ENCODE measurements at regions of chrX and their contacts with region 1.

Region 1: GRCh38 chrX:46758906-46759644 is at the start of gene SLC9A7:
- DNase-seq: peak; percentile 55 to 81 (median 75)
- ATAC-seq: peak; percentile 89
- H3K4me3 ChIP-seq: peak within 1 kb of the TSS; percentile 61
- H3K4me3 Mint-ChIP-seq: peak within 1 kb of the TSS; percentile 87 to 98 (median 90)
- H3K27ac ChIP-seq: peak within 1 kb of the TSS; percentile 41
- H3K27ac Mint-ChIP-seq: peak within 1 kb of the TSS in 8 of 9 donors; percentile 15 to 95 (median 72)
- H3K4me1 ChIP-seq: peaks cover 0 to 4% of the 10 kb centered on the region in 2 donors
- H3K4me1 Mint-ChIP-seq: peaks cover 4 to 24% (median 13%) of the 10 kb centered on the region in 7 donors
- H3K27me3 ChIP-seq: no peaks in the 10 kb centered on the region
- H3K27me3 Mint-ChIP-seq: peaks cover 0 to 18% (median 3%) of the 10 kb centered on the region in 5 donors
- total RNA-seq, gene SLC9A7: 3.0 to 11.3 (median 4.4) TPM

Region 2: GRCh38 chrX:46704767-46705386 is 54.2 kb before region 1 on chrX:
- CTCF ChIA-PET with region 1: no interaction called
- POLR2A ChIA-PET with region 1: no interaction called
- intact Hi-C with region 1: loop called in 1 of 2 experiments (anchors 5 kb)
- DNase-seq: peak in 1 of 9 donors; percentile 42
- ATAC-seq: peak; percentile 32
- H3K4me3 ChIP-seq: no peak overlapping the region
- H3K4me3 Mint-ChIP-seq: peak overlapping the region in 1 of 10 donors; percentile 76
- H3K27ac ChIP-seq: no peak overlapping the region
- H3K27ac Mint-ChIP-seq: peak overlapping the region in 5 of 9 donors; percentile 9 to 92 (median 35)
- H3K4me1 ChIP-seq: no peaks in the 10 kb centered on the region
- H3K4me1 Mint-ChIP-seq: peaks cover 6 to 45% (median 7%) of the 10 kb centered on the region in 7 donors
- H3K27me3 ChIP-seq: no peaks in the 10 kb centered on the region
- H3K27me3 Mint-ChIP-seq: no peaks in the 10 kb centered on the region

Region 3: GRCh38 chrX:46737473-46737872 is 21.6 kb before region 1 on chrX:
- CTCF ChIA-PET with region 1: no interaction called
- POLR2A ChIA-PET with region 1: no interaction called
- intact Hi-C with region 1: no loop called
- DNase-seq: no peak
- ATAC-seq: no peak
- H3K4me3 ChIP-seq: no peak overlapping the region
- H3K4me3 Mint-ChIP-seq: no peak overlapping the region
- H3K27ac ChIP-seq: no peak overlapping the region
- H3K27ac Mint-ChIP-seq: no peak overlapping the region
- H3K4me1 ChIP-seq: no peaks in the 10 kb centered on the region
- H3K4me1 Mint-ChIP-seq: peaks cover 0 to 11% (median 0%) of the 10 kb centered on the region in 7 donors
- H3K27me3 ChIP-seq: no peaks in the 10 kb centered on the region
- H3K27me3 Mint-ChIP-seq: no peaks in the 10 kb centered on the region

Region 4: DNA sequence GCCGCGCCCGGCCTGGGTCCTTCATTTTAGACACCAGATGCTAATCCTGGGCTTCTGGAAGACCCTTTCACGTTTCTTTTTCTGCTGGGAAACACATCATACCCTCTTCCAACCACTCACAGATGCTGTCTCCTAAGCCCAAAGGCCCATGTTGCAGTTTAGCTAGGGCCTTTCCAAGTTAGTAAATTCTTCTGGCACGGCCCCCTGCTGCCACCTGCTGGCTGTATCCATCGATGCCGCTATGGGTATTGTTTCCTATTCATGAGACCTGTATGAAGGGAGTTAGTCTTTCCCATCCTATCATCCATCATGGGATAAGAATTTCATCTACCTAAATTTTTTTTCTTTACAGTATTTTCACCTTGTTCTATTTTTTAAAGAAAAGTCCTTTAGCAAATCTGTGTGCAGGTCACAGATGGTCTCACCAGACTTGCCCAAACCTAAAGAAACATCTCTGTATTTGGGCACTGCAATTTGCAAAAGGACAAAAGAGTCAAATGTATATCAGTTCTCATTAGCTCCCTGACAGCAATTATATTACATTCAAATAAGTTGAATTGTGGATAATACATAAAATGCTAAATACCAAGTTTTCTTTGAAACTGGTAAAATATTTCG is 37.6 kb after region 1 on chrX:
- CTCF ChIA-PET with region 1: interaction called, 7 read pairs
- POLR2A ChIA-PET with region 1: interaction called, 3 read pairs
- intact Hi-C with region 1: loop called (anchors 1 kb)
- DNase-seq: peak; percentile 25 to 67 (median 52)
- ATAC-seq: peak; percentile 76
- H3K4me3 ChIP-seq: no peak overlapping the region
- H3K4me3 Mint-ChIP-seq: no peak overlapping the region
- H3K27ac ChIP-seq: no peak overlapping the region
- H3K27ac Mint-ChIP-seq: no peak overlapping the region
- H3K4me1 ChIP-seq: no peaks in the 10 kb centered on the region
- H3K4me1 Mint-ChIP-seq: peaks cover 0 to 19% (median 6%) of the 10 kb centered on the region in 7 donors
- H3K27me3 ChIP-seq: no peaks in the 10 kb centered on the region
- H3K27me3 Mint-ChIP-seq: peaks cover 0 to 6% (median 0%) of the 10 kb centered on the region in 5 donors

Region 5: DNA sequence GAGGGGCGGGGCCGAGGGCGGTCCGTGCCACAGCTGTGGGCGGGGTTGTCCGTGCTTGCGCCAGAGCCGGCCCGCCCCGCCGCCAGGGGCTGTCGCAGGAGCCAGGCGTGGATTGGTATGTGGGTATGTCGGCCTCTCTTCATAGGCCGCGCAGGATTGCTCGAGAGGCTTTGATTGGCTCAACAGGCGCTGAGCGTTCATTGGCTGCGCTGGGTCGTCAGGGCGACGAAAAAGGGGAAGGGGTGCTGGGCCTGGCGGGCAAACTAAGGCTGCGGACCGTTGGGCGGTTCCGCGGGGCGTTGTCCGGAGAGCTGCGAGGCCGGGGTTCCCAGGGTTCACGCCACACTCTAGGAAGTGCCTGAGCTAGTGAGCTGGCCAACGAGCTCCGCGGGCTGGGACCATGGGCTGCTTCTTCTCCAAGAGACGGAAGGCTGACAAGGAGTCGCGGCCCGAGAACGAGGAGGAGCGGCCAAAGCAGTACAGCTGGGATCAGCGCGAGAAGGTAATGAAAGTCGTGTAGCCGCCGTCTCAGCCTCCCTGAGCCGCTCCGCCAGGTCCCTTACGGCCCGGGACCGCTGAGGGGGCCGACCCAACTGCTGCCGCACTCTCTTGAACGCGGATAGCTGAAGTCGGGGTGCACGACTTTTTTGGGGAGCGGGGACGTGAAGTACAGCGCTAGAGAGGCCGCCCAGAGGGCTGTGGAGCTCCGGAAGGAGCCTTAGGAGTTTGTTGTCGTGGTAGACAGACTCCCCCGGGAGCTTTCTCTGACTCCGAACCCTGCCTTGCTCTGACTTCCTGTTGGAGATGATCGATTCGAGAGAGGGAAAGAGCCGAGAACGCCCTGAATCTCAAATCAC is 77.9 kb after region 1 on chrX and contains the start of gene RP2:
- CTCF ChIA-PET with region 1: no interaction called
- POLR2A ChIA-PET with region 1: no interaction called
- intact Hi-C with region 1: loop called (anchors 2 kb)
- DNase-seq: peak; percentile 65 to 84 (median 81)
- ATAC-seq: peak; percentile 98
- H3K4me3 ChIP-seq: peak within 1 kb of the TSS; percentile 91
- H3K4me3 Mint-ChIP-seq: peak within 1 kb of the TSS; percentile 93 to 99 (median 97)
- H3K27ac ChIP-seq: peak within 1 kb of the TSS; percentile 83
- H3K27ac Mint-ChIP-seq: peak within 1 kb of the TSS; percentile 80 to 98 (median 93)
- H3K4me1 ChIP-seq: no peaks in the 10 kb centered on the region
- H3K4me1 Mint-ChIP-seq: peaks cover 0 to 29% (median 12%) of the 10 kb centered on the region in 7 donors
- H3K27me3 ChIP-seq: no peaks in the 10 kb centered on the region
- H3K27me3 Mint-ChIP-seq: peaks cover 0 to 3% (median 0%) of the 10 kb centered on the region in 5 donors
- total RNA-seq, gene RP2: 4.9 to 14.5 (median 6.3) TPM

Region 6: GRCh38 chrX:46903458-46904242 is 144.6 kb after region 1 on chrX:
- CTCF ChIA-PET with region 1: no interaction called
- POLR2A ChIA-PET with region 1: no interaction called
- intact Hi-C with region 1: loop called in 1 of 2 experiments (anchors 1 kb)
- DNase-seq: peak; percentile 15 to 57 (median 37)
- ATAC-seq: peak; percentile 95
- H3K4me3 ChIP-seq: peak overlapping the region; percentile 27
- H3K4me3 Mint-ChIP-seq: peak overlapping the region in 9 of 10 donors; percentile 25 to 77 (median 58)
- H3K27ac ChIP-seq: no peak overlapping the region
- H3K27ac Mint-ChIP-seq: no peak overlapping the region
- H3K4me1 ChIP-seq: no peaks in the 10 kb centered on the region
- H3K4me1 Mint-ChIP-seq: no peaks in the 10 kb centered on the region
- H3K27me3 ChIP-seq: no peaks in the 10 kb centered on the region
- H3K27me3 Mint-ChIP-seq: peaks cover 0 to 30% (median 0%) of the 10 kb centered on the region in 5 donors

Region 7: GRCh38 chrX:47030339-47030738 is 271.3 kb after region 1 on chrX:
- CTCF ChIA-PET with region 1: no interaction called
- POLR2A ChIA-PET with region 1: no interaction called
- intact Hi-C with region 1: loop called in 1 of 2 experiments (anchors 5 kb)
- DNase-seq: peak in 7 of 9 donors; percentile 2 to 37 (median 32)
- ATAC-seq: no peak
- H3K4me3 ChIP-seq: no peak overlapping the region
- H3K4me3 Mint-ChIP-seq: no peak overlapping the region
- H3K27ac ChIP-seq: no peak overlapping the region
- H3K27ac Mint-ChIP-seq: no peak overlapping the region
- H3K4me1 ChIP-seq: no peaks in the 10 kb centered on the region
- H3K4me1 Mint-ChIP-seq: no peaks in the 10 kb centered on the region
- H3K27me3 ChIP-seq: no peaks in the 10 kb centered on the region
- H3K27me3 Mint-ChIP-seq: no peaks in the 10 kb centered on the region

Region 8: GRCh38 chrX:47523297-47523696 is 764.2 kb after region 1 on chrX:
- CTCF ChIA-PET with region 1: no interaction called
- POLR2A ChIA-PET with region 1: no interaction called
- intact Hi-C with region 1: loop called in 1 of 2 experiments (anchors 5 kb)
- DNase-seq: peak; percentile 50 to 85 (median 66)
- ATAC-seq: peak; percentile 99
- H3K4me3 ChIP-seq: peak overlapping the region; percentile 43
- H3K4me3 Mint-ChIP-seq: peak overlapping the region; percentile 66 to 82 (median 74)
- H3K27ac ChIP-seq: peak overlapping the region; percentile 3
- H3K27ac Mint-ChIP-seq: peak overlapping the region in 3 of 9 donors; percentile 42 to 47 (median 43)
- H3K4me1 ChIP-seq: no peaks in the 10 kb centered on the region
- H3K4me1 Mint-ChIP-seq: peaks cover 0 to 8% (median 0%) of the 10 kb centered on the region in 7 donors
- H3K27me3 ChIP-seq: no peaks in the 10 kb centered on the region
- H3K27me3 Mint-ChIP-seq: peaks cover 0 to 2% (median 0%) of the 10 kb centered on the region in 5 donors

Measured in naive thymus-derived CD4-positive, alpha-beta T cell (primary cell).